ENCODE measurements at regions of chr12 and their contacts with region 1.

Region 1: GRCh38 chr12:47889040-47889439 is 15.8 kb downstream of the VDR start:
- DNase-seq: no peak
- ATAC-seq: peak; percentile 57
- H3K4me3 ChIP-seq: no peak overlapping the region
- H3K27ac ChIP-seq: no peak overlapping the region; the same call in 1 of the 2 replicates
- H3K4me1 ChIP-seq: peaks cover 38% of the 10 kb centered on the region
- H3K27me3 ChIP-seq: no peaks in the 10 kb centered on the region
- CTCF ChIP-seq: no peak
- EP300 ChIP-seq: no peak
- POLR2A ChIP-seq: peak; percentile 59
- RAD21 ChIP-seq: no peak

Region 2: DNA sequence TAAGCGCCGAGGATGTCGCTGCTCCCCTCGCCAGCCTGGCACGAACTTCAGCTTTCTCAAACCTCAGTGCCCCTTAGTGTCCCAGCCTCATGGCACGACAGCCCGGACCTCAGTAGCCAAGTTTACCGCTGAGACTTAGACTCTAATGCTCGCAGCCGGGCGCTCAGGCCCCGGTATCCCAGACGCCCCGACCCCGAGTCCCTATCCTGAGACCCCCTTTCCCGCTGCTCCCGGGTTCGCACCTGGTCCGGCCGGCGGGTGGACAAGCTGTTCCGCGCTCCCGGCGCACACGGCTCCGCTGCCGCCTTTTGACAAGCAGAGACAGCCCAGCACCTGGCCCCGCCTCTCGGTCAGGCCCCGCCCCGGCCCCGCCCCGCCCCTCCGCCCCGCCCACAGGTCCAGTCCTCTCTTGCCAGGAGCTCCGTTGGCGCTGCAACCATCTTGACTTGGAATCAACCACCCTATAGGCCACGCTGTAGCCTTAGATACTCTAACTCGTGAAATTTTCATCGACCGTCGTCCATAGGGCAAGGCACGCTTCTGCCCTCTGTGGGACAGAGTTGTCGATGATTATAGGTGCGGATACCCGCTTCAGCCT is 15.8 kb after region 1 on chr12 and contains the start of gene VDR:
- CTCF ChIA-PET with region 1: interaction called, 28 read pairs
- POLR2A ChIA-PET with region 1: interaction called, 7 read pairs
- RAD21 ChIA-PET with region 1: interaction called, 28 read pairs
- SMC1A ChIA-PET with region 1: interaction called, 21 read pairs
- in situ Hi-C with region 1: no loop called
- intact Hi-C with region 1: no loop called
- DNase-seq: no peak
- ATAC-seq: peak; percentile 85
- H3K4me3 ChIP-seq: peak within 1 kb of the TSS; percentile 84
- H3K27ac ChIP-seq: no peak within 1 kb of the TSS
- H3K4me1 ChIP-seq: peaks cover 30% of the 10 kb centered on the region
- H3K27me3 ChIP-seq: peaks cover 4 to 5% of the 10 kb centered on the region in 2 experiments; a peak in 1 of 4 replicates
- CTCF ChIP-seq: peak in 2 of 3 experiments; percentile 4 to 34; a peak in 2 of 6 replicates
- EP300 ChIP-seq: no peak
- POLR2A ChIP-seq: peak; percentile 69
- RAD21 ChIP-seq: no peak
- polyA plus RNA-seq, gene VDR: 0.27 to 0.75 TPM